ENCODE measurements at regions of chr18 and their contacts with region 1.

Region 1: GRCh38 chr18:60549338-60549960 is 176.9 kb upstream of the MC4R start:
- DNase-seq: peak; percentile 16
- ATAC-seq: no peak
- H3K4me3 Mint-ChIP-seq: no peak overlapping the region
- H3K27ac Mint-ChIP-seq: no peak overlapping the region
- H3K4me1 Mint-ChIP-seq: no peaks in the 10 kb centered on the region
- H3K27me3 Mint-ChIP-seq: no peaks in the 10 kb centered on the region

Region 2: GRCh38 chr18:59459369-59460079 is 1089.9 kb before region 1 on chr18:
- CTCF ChIA-PET with region 1: interaction called, 8 read pairs
- POLR2A ChIA-PET with region 1: no interaction called
- intact Hi-C with region 1: loop called in 1 of 2 experiments (anchors 2 kb)
- DNase-seq: no peak
- ATAC-seq: no peak
- H3K4me3 Mint-ChIP-seq: no peak overlapping the region
- H3K27ac Mint-ChIP-seq: no peak overlapping the region
- H3K4me1 Mint-ChIP-seq: no peaks in the 10 kb centered on the region
- H3K27me3 Mint-ChIP-seq: peaks cover 17% of the 10 kb centered on the region

Region 3: GRCh38 chr18:59783138-59783537 is 766.3 kb before region 1 on chr18:
- CTCF ChIA-PET with region 1: no interaction called
- POLR2A ChIA-PET with region 1: no interaction called
- intact Hi-C with region 1: loop called in 1 of 2 experiments (anchors 1 kb)
- DNase-seq: peak; percentile 46
- ATAC-seq: no peak
- H3K4me3 Mint-ChIP-seq: no peak overlapping the region
- H3K27ac Mint-ChIP-seq: no peak overlapping the region
- H3K4me1 Mint-ChIP-seq: no peaks in the 10 kb centered on the region
- H3K27me3 Mint-ChIP-seq: peaks cover 6% of the 10 kb centered on the region

Region 4: DNA sequence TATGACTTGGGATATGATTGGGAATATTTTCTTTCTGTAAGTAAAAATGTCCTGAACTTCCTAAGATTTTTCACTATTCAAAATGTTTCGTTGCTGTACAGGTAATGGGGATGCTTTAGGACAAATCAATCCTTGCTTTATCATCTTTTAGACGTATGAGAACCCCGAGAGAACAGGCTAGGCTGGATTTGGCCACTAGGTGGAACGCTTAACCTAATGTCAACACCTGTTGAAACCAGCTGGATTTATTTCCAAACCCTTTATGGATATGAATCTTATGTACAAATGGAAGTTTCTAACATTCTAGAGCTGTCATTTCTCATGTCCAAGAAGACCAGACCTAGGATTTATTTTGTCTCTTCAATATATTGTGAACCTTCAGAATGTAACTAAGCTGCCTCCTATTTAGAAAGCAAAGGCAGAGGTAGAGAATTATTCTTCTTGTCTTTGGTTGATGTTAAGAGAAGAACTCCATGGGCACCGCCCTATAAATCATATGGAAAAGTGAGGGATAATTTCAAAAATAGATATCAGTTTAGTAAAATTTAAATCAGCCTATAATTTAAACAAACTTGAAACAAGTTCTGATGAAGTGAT is 553.0 kb before region 1 on chr18:
- CTCF ChIA-PET with region 1: interaction called, 15 read pairs
- POLR2A ChIA-PET with region 1: no interaction called
- intact Hi-C with region 1: no loop called
- DNase-seq: peak; percentile 53
- ATAC-seq: no peak
- H3K4me3 Mint-ChIP-seq: no peak overlapping the region
- H3K27ac Mint-ChIP-seq: no peak overlapping the region
- H3K4me1 Mint-ChIP-seq: no peaks in the 10 kb centered on the region
- H3K27me3 Mint-ChIP-seq: peaks cover 26% of the 10 kb centered on the region

Region 5: GRCh38 chr18:60471652-60472051 is 77.8 kb before region 1 on chr18:
- CTCF ChIA-PET with region 1: no interaction called
- POLR2A ChIA-PET with region 1: no interaction called
- intact Hi-C with region 1: no loop called
- DNase-seq: no peak
- ATAC-seq: no peak
- H3K4me3 Mint-ChIP-seq: no peak overlapping the region
- H3K27ac Mint-ChIP-seq: no peak overlapping the region
- H3K4me1 Mint-ChIP-seq: no peaks in the 10 kb centered on the region
- H3K27me3 Mint-ChIP-seq: no peaks in the 10 kb centered on the region

Measured in activated CD4-positive, alpha-beta T cell treated with anti-CD3 and anti-CD28 coated beads for 36 hours (primary cell).